ENCODE measurements at regions of chr15 and their contacts with region 1.

Region 1: GRCh38 chr15:75684642-75685041 is 28.0 kb downstream of the CSPG4 start:
- DNase-seq: no peak
- H3K4me3 Mint-ChIP-seq: no peak overlapping the region
- H3K27ac Mint-ChIP-seq: no peak overlapping the region
- H3K4me1 Mint-ChIP-seq: no peaks in the 10 kb centered on the region
- H3K27me3 Mint-ChIP-seq: no peaks in the 10 kb centered on the region
- CTCF ChIP-seq: no peak

Region 2: DNA sequence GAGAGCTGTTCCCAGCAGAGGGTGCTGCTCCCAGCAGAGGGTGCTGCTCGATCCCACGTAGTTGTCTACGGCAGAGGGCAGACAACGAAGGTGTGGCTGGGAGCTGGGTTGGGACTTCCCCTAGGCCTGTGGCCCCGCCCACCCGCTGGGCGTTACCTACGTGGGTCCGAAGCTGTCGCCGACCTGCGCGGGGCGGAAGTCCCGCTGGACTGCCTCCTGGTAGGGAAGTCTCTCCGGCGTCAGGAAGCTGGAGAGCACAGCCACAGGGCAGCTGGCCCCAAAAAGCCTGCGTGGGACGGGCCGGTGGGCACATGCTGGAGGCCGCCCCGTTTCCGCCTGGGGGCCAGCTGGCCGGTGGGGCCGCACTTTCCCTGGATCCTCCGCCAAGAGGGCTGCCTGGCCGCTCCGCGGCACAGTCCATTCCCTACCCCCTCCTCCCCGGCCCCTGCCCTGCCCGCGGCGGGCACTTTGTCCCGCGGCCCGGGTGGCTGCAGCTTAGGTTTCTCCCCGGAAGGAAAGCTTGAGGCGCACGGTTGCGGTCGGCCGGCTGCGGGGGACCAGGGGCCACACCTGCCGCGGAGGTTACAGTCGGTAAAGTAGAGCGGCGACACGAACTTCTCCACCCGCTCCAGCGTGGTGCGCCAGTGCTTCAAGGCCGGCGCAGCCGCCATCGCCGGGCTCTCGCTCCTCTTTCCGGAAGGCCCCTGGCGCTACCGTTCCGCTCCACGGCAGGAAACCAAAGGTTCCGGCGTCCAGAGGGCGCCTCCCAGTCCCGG is 316.5 kb before region 1 on chr15 and contains the start of gene MAN2C1:
- CTCF ChIA-PET with region 1: interaction called, 12 read pairs
- intact Hi-C with region 1: no loop called
- DNase-seq: peak; percentile 99
- H3K4me3 Mint-ChIP-seq: peak within 1 kb of the TSS; percentile 85
- H3K27ac Mint-ChIP-seq: peak within 1 kb of the TSS; percentile 93
- H3K4me1 Mint-ChIP-seq: peaks cover 16% of the 10 kb centered on the region
- H3K27me3 Mint-ChIP-seq: no peaks in the 10 kb centered on the region
- CTCF ChIP-seq: peak; percentile 76
- total RNA-seq, gene MAN2C1: 239 and 243 TPM in 2 replicates

Region 3: DNA sequence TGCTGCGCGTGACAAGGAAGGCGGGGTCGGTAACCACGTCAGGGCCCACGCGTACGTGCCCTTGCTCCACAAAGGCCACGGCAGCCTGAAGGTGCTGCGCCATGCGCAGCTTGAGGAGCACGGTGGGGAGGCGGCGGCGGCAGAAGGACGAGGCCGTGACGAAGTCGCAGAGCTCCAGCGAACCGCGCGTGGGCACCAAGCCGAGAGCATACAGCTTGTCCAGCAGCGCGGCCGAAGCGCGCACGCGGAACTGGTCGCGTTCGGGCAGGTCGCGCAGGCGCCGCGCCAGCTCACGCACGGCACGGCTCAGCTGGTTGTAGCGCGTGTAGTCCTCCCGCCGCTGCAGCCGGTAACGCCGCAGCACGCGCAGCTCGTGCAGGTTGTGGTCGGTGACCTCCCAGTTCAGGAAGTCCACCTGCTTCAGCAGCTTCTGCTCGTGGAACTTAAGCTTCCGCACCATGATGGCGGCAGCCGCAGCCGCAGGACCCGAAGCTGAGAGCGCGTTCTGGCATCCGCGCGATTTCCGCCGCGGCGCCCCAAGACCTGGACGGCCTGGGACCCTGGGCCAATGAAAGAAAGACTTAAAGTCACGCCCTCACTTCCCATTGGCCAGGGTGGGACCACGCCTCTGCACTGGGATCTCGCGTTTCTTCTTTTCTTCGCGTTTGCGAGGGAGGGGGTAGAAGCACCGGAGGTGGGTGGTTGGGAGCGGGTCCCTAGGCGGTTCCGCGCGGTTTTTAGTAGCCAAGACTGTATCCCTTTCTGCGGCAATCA is 44.7 kb before region 1 on chr15 and contains the start of gene IMP3:
- CTCF ChIA-PET with region 1: interaction called, 5 read pairs
- intact Hi-C with region 1: loop called (anchors 5 kb)
- DNase-seq: peak; percentile 97
- H3K4me3 Mint-ChIP-seq: peak within 1 kb of the TSS; percentile 87
- H3K27ac Mint-ChIP-seq: peak within 1 kb of the TSS; percentile 84
- H3K4me1 Mint-ChIP-seq: peaks cover 28% of the 10 kb centered on the region
- H3K27me3 Mint-ChIP-seq: no peaks in the 10 kb centered on the region
- CTCF ChIP-seq: no peak
- total RNA-seq, gene IMP3: 77.8 and 91.5 TPM in 2 replicates

Region 4: DNA sequence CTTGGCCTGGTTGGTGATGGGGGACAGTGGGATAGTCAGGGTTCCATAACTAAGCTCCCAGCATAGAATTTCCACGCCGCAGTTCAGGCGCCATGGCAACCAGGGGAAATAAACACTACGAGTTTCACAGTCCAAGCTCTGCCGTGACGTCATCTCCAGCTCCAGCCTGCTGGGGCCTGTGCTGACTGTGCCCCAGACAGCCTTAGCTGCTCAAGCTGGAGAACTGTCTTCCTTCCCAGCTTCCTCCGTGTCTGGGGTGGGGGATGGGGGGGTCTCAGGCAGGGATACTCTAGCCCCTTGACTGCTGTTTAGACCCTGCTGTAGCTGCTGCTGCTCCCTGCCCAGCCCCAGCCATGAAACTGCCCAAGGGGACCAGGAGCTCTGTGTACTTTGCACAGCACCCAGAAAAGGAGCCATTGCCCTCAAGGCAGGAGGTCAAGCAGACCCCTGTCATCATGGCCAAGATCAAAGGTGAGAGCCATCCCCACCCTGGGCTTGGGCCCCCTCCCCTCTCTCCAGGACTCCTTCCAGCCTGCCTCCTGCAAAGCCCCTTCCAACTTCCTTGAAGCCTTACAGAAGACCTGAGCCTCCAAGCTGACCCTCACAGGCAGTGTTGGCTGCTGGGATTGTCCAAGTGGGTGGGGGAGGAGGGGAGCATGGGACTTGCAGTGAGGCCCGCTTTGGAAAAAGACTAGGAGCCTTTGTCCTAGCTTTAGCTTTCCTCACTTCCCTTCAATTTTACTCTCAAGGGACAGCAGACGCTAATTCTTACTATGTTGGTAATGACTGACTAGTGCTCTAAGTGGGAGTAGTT is 39.4 kb after region 1 on chr15:
- CTCF ChIA-PET with region 1: interaction called, 9 read pairs
- intact Hi-C with region 1: loop called (anchors 2 kb)
- DNase-seq: peak; percentile 84
- H3K4me3 Mint-ChIP-seq: no peak overlapping the region
- H3K27ac Mint-ChIP-seq: peak overlapping the region; percentile 31
- H3K4me1 Mint-ChIP-seq: peaks cover 18% of the 10 kb centered on the region
- H3K27me3 Mint-ChIP-seq: peaks cover 36% of the 10 kb centered on the region
- CTCF ChIP-seq: no peak

Region 5: GRCh38 chr15:75801859-75802593 is 117.4 kb after region 1 on chr15:
- CTCF ChIA-PET with region 1: interaction called, 19 read pairs
- intact Hi-C with region 1: no loop called
- DNase-seq: peak; percentile 89
- H3K4me3 Mint-ChIP-seq: peak overlapping the region; percentile 41
- H3K27ac Mint-ChIP-seq: no peak overlapping the region
- H3K4me1 Mint-ChIP-seq: peaks cover 8% of the 10 kb centered on the region
- H3K27me3 Mint-ChIP-seq: peaks cover 93% of the 10 kb centered on the region
- CTCF ChIP-seq: peak; percentile 92

Measured in Calu3 (cell line).